PC-9 (cell line): ENCODE measurements at regions of chr15 and their contacts with region 1.

Region 1: GRCh38 chr15:43510200-43511011 is 7.0 kb upstream of the MAP1A start:
- DNase-seq: peak; percentile 90 to 97
- H3K4me3 ChIP-seq: peak overlapping the region; percentile 87
- H3K27ac ChIP-seq: no peak overlapping the region
- H3K4me1 ChIP-seq: 0 out of 2 replicates have a peak, but pooled peaks cover 5% of the 10 kb centered on the region
- H3K27me3 ChIP-seq: no peaks in the 10 kb centered on the region
- CTCF ChIP-seq: no peak

Region 2: GRCh38 chr15:43204016-43204901 is 306.1 kb before region 1 on chr15:
- CTCF ChIA-PET with region 1: no interaction called
- POLR2A ChIA-PET with region 1: no interaction called
- intact Hi-C with region 1: no loop called
- DNase-seq: no peak
- H3K4me3 ChIP-seq: no peak overlapping the region
- H3K27ac ChIP-seq: no peak overlapping the region
- H3K4me1 ChIP-seq: no peaks in the 10 kb centered on the region
- H3K27me3 ChIP-seq: no peaks in the 10 kb centered on the region
- CTCF ChIP-seq: peak; percentile 54

Region 3: GRCh38 chr15:43410572-43411214 is 99.7 kb before region 1 on chr15:
- CTCF ChIA-PET with region 1: no interaction called
- POLR2A ChIA-PET with region 1: no interaction called
- intact Hi-C with region 1: no loop called
- DNase-seq: no peak
- H3K4me3 ChIP-seq: no peak overlapping the region
- H3K27ac ChIP-seq: peak overlapping the region; percentile 35
- H3K4me1 ChIP-seq: no peaks in the 10 kb centered on the region
- H3K27me3 ChIP-seq: no peaks in the 10 kb centered on the region
- CTCF ChIP-seq: no peak

Region 4: GRCh38 chr15:43492673-43493601 is 17.5 kb before region 1 on chr15 and contains the start of gene TP53BP1:
- CTCF ChIA-PET with region 1: interaction called, 3 read pairs
- POLR2A ChIA-PET with region 1: interaction called, 19 read pairs
- intact Hi-C with region 1: no loop called
- DNase-seq: peak; percentile 83 to 94
- H3K4me3 ChIP-seq: peak within 1 kb of the TSS; percentile 57
- H3K27ac ChIP-seq: no peak within 1 kb of the TSS
- H3K4me1 ChIP-seq: peaks cover 8% of the 10 kb centered on the region; the same call in 1 of the 2 replicates
- H3K27me3 ChIP-seq: no peaks in the 10 kb centered on the region
- CTCF ChIP-seq: no peak
- total RNA-seq, gene TP53BP1: 62.1 and 66.8 TPM in 2 replicates

Region 5: GRCh38 chr15:43541785-43542184 is 31.4 kb after region 1 on chr15:
- CTCF ChIA-PET with region 1: no interaction called
- POLR2A ChIA-PET with region 1: interaction called, 13 read pairs
- intact Hi-C with region 1: no loop called
- DNase-seq: no peak
- H3K4me3 ChIP-seq: no peak overlapping the region
- H3K27ac ChIP-seq: no peak overlapping the region
- H3K4me1 ChIP-seq: 0 out of 2 replicates have a peak, but pooled peaks cover 3% of the 10 kb centered on the region
- H3K27me3 ChIP-seq: no peaks in the 10 kb centered on the region
- CTCF ChIP-seq: no peak

Region 6: DNA sequence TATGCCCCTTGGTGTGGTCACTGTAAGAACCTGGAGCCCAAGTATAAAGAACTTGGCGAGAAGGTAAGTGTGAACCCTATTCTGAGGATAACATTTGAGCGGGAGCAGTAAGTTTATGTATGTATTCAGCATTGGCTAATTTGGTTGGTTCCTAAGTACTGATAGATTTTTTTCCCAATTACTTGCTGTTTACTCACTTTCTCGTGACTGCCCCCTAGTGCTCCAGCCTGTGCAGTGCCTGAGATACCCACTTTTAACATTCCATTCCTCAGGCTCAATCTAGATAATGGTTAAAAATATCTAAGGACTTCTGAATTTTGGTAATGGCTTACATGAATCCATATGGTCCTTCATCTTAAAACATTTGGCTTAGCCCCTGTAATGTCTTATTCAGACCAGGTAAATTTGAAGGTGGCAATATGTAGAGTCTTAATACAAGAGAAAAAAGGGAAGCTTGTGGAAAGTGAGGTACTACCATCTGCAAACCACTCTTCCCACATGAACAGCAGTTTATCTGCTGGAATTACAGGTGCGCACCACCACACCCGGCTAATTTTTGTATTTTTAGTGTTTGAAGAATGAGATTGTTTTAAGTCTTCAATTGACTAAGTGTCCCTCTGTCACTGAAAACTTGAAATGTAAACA is 259.3 kb after region 1 on chr15:
- CTCF ChIA-PET with region 1: no interaction called
- POLR2A ChIA-PET with region 1: interaction called, 17 read pairs
- intact Hi-C with region 1: no loop called
- DNase-seq: peak in 1 of 2 experiments; percentile 50
- H3K4me3 ChIP-seq: no peak overlapping the region
- H3K27ac ChIP-seq: no peak overlapping the region
- H3K4me1 ChIP-seq: no peaks in the 10 kb centered on the region
- H3K27me3 ChIP-seq: no peaks in the 10 kb centered on the region
- CTCF ChIP-seq: peak; percentile 76